ENCODE measurements at regions of chr11 and their contacts with region 1.

Region 1: DNA sequence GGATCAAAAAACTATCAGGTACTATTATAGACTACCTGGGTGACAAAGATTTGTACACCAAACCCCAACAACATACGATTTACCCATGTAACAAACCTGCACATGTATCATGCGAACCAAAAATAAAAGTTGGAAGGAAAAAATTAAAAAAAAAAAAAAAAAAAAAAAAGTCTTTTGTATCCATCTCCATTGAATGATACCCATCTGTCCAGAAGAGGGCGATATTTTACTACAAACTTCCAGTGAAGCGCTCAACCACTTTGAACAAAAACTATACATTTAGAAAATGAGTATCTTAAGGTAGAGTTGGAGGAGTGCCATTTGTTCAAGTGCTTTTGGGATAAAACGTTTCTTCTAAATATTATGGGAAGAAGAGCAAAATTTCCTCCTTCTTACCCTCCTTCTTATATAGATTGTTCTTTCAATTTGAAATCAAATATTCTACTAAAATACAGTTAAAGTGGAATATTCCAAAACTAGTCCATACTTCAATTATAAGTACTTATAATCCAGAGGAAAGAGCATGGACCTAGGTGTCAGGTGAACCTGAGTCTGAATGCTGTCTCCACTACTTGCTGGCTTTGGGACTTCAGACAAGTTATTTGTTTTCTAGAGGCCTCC is 23.3 kb downstream of the ARL14EP start:
- DNase-seq: peak in 2 of 5 donors; percentile 77 to 91
- H3K4me3 ChIP-seq: no peak overlapping the region
- H3K27ac ChIP-seq: no peak overlapping the region
- H3K4me1 ChIP-seq: no peaks in the 10 kb centered on the region
- H3K27me3 ChIP-seq: no peaks in the 10 kb centered on the region
- CTCF ChIP-seq: peak; percentile 57

Region 2: GRCh38 chr11:30855383-30856006 is 509.3 kb after region 1 on chr11:
- intact Hi-C with region 1: loop called (anchors 10 kb)
- DNase-seq: peak in 2 of 5 donors; percentile 34 to 56
- H3K4me3 ChIP-seq: no peak overlapping the region
- H3K27ac ChIP-seq: no peak overlapping the region
- H3K4me1 ChIP-seq: no peaks in the 10 kb centered on the region
- H3K27me3 ChIP-seq: no peaks in the 10 kb centered on the region
- CTCF ChIP-seq: no peak

Region 3: GRCh38 chr11:30917859-30918478 is 571.8 kb after region 1 on chr11:
- intact Hi-C with region 1: loop called (anchors 10 kb)
- DNase-seq: peak in 3 of 5 donors; percentile 23 to 84 (median 79)
- H3K4me3 ChIP-seq: no peak overlapping the region
- H3K27ac ChIP-seq: no peak overlapping the region
- H3K4me1 ChIP-seq: no peaks in the 10 kb centered on the region
- H3K27me3 ChIP-seq: no peaks in the 10 kb centered on the region
- CTCF ChIP-seq: peak; percentile 65

Measured in kidney (tissue), 22 donors.